CD8-positive, alpha-beta T cell (primary cell): ENCODE measurements at regions of chr6 and their contacts with region 1.

Region 1: GRCh38 chr6:30066577-30067459 is at the start of gene PPP1R11:
- DNase-seq: peak; percentile 96 to 100 (median 98)
- ATAC-seq: peak; percentile 96
- H3K4me3 ChIP-seq: peak within 1 kb of the TSS; percentile 95 to 98
- H3K4me3 Mint-ChIP-seq: peak within 1 kb of the TSS; percentile 100
- H3K27ac ChIP-seq: peak within 1 kb of the TSS; percentile 96 to 99
- H3K27ac Mint-ChIP-seq: peak within 1 kb of the TSS; percentile 100
- H3K4me1 ChIP-seq: peaks cover 44% of the 10 kb centered on the region
- H3K4me1 Mint-ChIP-seq: peaks cover 56% of the 10 kb centered on the region
- H3K27me3 ChIP-seq: peaks cover 0 to 1% of the 10 kb centered on the region in 2 experiments
- H3K27me3 Mint-ChIP-seq: peaks cover 12% of the 10 kb centered on the region
- CTCF ChIP-seq: no peak
- total RNA-seq, gene PPP1R11: 24.7 to 28.3 TPM

Region 2: GRCh38 chr6:29649701-29650673 is 416.8 kb before region 1 on chr6:
- CTCF ChIA-PET with region 1: interaction called, 3 read pairs
- POLR2A ChIA-PET with region 1: no interaction called
- intact Hi-C with region 1: loop called in 1 of 2 experiments (anchors 5 kb)
- DNase-seq: peak; percentile 93 to 99 (median 99)
- ATAC-seq: peak; percentile 94
- H3K4me3 ChIP-seq: peak overlapping the region; percentile 67 to 68
- H3K4me3 Mint-ChIP-seq: peak overlapping the region; percentile 97
- H3K27ac ChIP-seq: peak overlapping the region; percentile 93 to 95
- H3K27ac Mint-ChIP-seq: peak overlapping the region; percentile 100
- H3K4me1 ChIP-seq: peaks cover 12% of the 10 kb centered on the region
- H3K4me1 Mint-ChIP-seq: peaks cover 13% of the 10 kb centered on the region
- H3K27me3 ChIP-seq: no peaks in the 10 kb centered on the region
- H3K27me3 Mint-ChIP-seq: peaks cover under 1% of the 10 kb centered on the region
- CTCF ChIP-seq: peak; percentile 98

Region 3: DNA sequence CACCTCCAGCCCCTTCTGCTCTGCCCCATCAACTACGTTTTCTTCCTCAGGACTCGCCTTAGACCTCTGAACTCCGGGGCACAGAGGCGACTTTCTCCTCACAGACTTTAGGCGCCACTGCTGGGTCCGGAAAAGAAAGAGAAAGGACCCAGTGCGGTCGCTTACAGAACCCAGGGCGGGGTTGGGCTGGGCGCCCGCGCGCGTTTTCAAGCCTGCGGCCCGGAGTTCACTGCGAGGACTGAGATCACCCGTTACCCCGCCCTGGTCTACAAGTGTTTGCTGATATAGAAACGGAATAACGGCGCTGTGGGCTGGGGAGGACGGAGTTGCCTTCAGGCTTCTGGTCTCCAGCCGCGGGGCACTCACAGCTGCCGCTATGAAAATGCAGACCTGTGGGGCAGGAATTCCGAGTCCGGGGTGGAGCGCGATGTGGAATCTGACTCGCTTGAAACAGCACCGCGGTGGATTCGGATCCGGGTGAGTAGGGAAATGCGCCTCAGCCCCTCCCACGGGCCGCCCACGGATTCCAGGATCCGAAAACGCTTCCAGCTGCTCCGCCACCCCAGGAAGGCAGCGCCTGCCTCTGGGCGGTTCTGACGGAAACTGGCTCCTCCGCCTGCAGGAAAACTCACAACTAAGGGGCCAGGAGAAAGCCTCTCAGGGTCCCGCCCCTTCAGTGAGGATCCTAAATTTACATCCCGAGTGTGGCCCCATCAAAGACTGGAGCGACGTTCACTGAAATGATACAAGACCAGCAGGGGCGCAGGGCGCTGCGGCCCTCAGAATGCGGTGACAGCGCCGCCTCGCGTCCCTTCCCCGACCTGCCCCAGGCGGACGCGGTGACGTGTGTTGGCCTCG is 314.1 kb before region 1 on chr6:
- CTCF ChIA-PET with region 1: no interaction called
- POLR2A ChIA-PET with region 1: no interaction called
- intact Hi-C with region 1: loop called (anchors 2 kb)
- DNase-seq: peak; percentile 69 to 93 (median 85)
- ATAC-seq: peak; percentile 67
- H3K4me3 ChIP-seq: peak overlapping the region; percentile 74 to 96
- H3K4me3 Mint-ChIP-seq: peak overlapping the region; percentile 96
- H3K27ac ChIP-seq: peak overlapping the region; percentile 67 to 75
- H3K27ac Mint-ChIP-seq: peak overlapping the region; percentile 92
- H3K4me1 ChIP-seq: peaks cover 21% of the 10 kb centered on the region
- H3K4me1 Mint-ChIP-seq: peaks cover 40% of the 10 kb centered on the region
- H3K27me3 ChIP-seq: no peaks in the 10 kb centered on the region
- H3K27me3 Mint-ChIP-seq: no peaks in the 10 kb centered on the region
- CTCF ChIP-seq: peak; percentile 98

Region 4: DNA sequence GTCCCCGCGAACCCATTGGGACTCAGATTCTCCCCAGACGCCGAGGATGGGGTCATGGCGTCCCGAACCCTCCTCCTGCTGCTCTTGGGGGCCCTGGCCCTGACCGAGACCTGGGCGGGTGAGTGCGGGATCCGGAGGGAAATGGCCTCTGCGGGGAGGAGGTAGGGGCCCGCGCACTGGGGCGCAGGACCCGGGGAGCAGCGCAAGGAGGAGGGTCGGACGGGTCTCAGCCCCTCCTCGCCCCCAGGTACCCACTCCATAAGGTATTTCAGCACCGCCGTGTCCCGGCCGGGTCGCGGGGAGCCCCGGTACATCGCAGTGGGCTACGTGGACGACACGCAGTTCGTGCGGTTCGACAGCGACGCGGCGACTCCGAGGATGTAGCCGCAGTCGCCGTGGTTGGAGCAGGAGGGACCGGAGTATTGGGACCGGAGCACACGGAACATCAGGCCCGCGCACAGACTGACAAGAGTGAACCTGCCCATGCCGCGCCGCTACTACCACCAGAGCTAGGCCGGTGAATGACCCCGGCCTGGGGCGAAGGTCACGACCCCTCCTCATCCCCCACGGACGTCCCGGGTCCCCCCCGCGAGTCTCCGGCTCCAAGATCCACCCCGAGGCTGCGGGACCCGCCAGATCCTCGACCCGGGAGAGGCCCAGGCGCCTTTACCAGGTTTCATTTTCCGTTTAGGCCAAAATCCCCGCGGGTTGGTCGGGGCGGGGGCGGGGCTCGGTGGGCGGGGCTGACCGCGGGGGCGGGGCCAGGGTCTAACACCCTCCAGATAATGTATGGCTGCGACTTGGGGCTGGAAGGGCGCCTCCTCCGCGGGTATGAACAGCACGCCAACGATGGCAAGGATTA is 140.2 kb before region 1 on chr6:
- CTCF ChIA-PET with region 1: no interaction called
- POLR2A ChIA-PET with region 1: no interaction called
- intact Hi-C with region 1: loop called (anchors 2 to 5 kb)
- DNase-seq: peak; percentile 65 to 93 (median 83)
- ATAC-seq: peak; percentile 93
- H3K4me3 ChIP-seq: peak overlapping the region; percentile 88 to 93
- H3K4me3 Mint-ChIP-seq: peak overlapping the region; percentile 83
- H3K27ac ChIP-seq: peak overlapping the region; percentile 92 to 99
- H3K27ac Mint-ChIP-seq: peak overlapping the region; percentile 94
- H3K4me1 ChIP-seq: peaks cover 8% of the 10 kb centered on the region
- H3K4me1 Mint-ChIP-seq: peaks cover 32% of the 10 kb centered on the region
- H3K27me3 ChIP-seq: no peaks in the 10 kb centered on the region
- H3K27me3 Mint-ChIP-seq: no peaks in the 10 kb centered on the region
- CTCF ChIP-seq: no peak

Region 5: DNA sequence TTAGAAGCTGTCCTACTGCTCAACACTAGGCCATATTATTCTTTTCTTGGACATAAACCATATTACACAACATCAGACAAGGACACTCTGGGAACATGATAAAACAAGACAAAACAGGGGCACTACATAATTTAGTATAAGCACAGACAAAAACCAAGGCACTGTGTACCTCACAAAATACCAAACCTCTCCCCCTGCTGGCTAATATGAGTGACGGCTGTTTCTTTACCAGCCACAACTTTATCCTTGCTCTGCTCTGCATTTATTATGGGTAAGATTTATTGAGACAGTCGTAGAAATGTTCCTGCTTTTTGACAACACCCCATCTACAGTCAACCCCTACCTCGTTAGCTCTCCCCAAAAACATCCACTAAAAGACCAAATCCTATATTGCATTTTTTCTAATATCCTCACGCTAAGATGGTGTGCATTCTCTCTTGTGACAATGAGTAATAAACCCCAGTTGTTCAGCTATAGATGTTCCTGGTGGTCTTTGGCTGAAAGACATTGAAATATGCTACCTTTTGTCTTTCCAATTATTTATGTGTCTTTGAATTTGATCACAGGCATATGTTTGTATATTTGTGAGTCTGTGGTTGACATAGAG is 29.5 kb before region 1 on chr6:
- CTCF ChIA-PET with region 1: no interaction called
- POLR2A ChIA-PET with region 1: no interaction called
- intact Hi-C with region 1: no loop called
- DNase-seq: peak in 2 of 9 experiments; percentile 14 to 28
- ATAC-seq: no peak
- H3K4me3 ChIP-seq: no peak overlapping the region
- H3K4me3 Mint-ChIP-seq: no peak overlapping the region
- H3K27ac ChIP-seq: no peak overlapping the region
- H3K27ac Mint-ChIP-seq: no peak overlapping the region
- H3K4me1 ChIP-seq: no peaks in the 10 kb centered on the region
- H3K4me1 Mint-ChIP-seq: peaks cover 10% of the 10 kb centered on the region
- H3K27me3 ChIP-seq: no peaks in the 10 kb centered on the region
- H3K27me3 Mint-ChIP-seq: no peaks in the 10 kb centered on the region
- CTCF ChIP-seq: peak; percentile 23

Region 6: DNA sequence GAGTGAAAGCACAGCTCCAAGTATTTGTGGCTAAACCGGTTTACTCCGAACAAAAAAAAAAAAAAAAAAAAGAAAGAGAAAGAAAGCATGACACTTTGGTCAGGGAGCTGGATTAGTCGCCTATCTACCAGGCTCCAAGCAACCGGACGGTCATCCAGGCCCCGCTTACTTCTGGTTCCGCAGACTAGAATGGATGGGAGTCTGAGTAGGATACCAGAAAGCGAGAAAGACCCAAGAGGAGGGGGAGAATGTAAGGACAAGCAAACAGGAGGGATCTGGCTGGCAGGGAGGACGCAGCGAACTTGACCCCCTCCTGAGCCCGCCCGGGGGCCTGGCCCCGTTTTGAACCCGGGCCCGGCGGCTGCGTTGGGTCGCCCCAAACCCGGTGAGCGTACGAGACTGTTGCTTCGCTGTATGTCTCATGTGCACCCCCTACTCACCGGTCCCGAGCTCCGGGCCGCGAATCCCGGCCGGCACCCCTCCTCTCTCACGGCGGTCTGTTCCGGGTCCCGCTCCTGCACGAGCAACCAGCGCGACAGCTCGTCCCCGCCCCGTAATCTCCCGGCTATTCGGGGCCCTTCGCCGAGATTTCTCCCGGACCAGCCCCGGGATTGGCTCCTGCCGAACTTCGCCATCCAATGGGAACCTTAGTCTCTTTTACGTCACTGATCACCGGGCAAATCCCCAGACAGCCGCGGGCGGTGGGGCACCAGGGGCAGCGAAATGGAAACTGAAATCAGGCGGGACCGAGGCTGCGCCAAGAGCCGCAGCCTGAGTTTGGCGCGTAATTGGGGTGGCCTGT is 146.2 kb after region 1 on chr6 and contains the start of gene TRIM26:
- CTCF ChIA-PET with region 1: no interaction called
- POLR2A ChIA-PET with region 1: interaction called, 3 read pairs
- intact Hi-C with region 1: loop called in 1 of 2 experiments (anchors 2 kb)
- DNase-seq: peak; percentile 92 to 98 (median 96)
- ATAC-seq: peak; percentile 86
- H3K4me3 ChIP-seq: peak within 1 kb of the TSS; percentile 76 to 99
- H3K4me3 Mint-ChIP-seq: peak within 1 kb of the TSS; percentile 99
- H3K27ac ChIP-seq: peak within 1 kb of the TSS; percentile 96
- H3K27ac Mint-ChIP-seq: peak within 1 kb of the TSS; percentile 99
- H3K4me1 ChIP-seq: peaks cover 33% of the 10 kb centered on the region
- H3K4me1 Mint-ChIP-seq: peaks cover 63% of the 10 kb centered on the region
- H3K27me3 ChIP-seq: no peaks in the 10 kb centered on the region
- H3K27me3 Mint-ChIP-seq: no peaks in the 10 kb centered on the region
- CTCF ChIP-seq: no peak
- total RNA-seq, gene TRIM26: 54.8 to 56.8 TPM

Region 7: GRCh38 chr6:30571075-30571768 is 504.4 kb after region 1 on chr6 and contains the start of gene ABCF1:
- CTCF ChIA-PET with region 1: no interaction called
- POLR2A ChIA-PET with region 1: no interaction called
- intact Hi-C with region 1: loop called in 1 of 2 experiments (anchors 2 kb)
- DNase-seq: peak; percentile 99 to 100 (median 100)
- ATAC-seq: peak; percentile 96
- H3K4me3 ChIP-seq: peak within 1 kb of the TSS; percentile 64 to 86
- H3K4me3 Mint-ChIP-seq: peak within 1 kb of the TSS; percentile 98
- H3K27ac ChIP-seq: peak within 1 kb of the TSS; percentile 90 to 98
- H3K27ac Mint-ChIP-seq: peak within 1 kb of the TSS; percentile 99
- H3K4me1 ChIP-seq: peaks cover 54% of the 10 kb centered on the region
- H3K4me1 Mint-ChIP-seq: peaks cover 69% of the 10 kb centered on the region
- H3K27me3 ChIP-seq: no peaks in the 10 kb centered on the region
- H3K27me3 Mint-ChIP-seq: no peaks in the 10 kb centered on the region
- CTCF ChIP-seq: no peak
- total RNA-seq, gene ABCF1: 121 to 130 TPM

Region 8: DNA sequence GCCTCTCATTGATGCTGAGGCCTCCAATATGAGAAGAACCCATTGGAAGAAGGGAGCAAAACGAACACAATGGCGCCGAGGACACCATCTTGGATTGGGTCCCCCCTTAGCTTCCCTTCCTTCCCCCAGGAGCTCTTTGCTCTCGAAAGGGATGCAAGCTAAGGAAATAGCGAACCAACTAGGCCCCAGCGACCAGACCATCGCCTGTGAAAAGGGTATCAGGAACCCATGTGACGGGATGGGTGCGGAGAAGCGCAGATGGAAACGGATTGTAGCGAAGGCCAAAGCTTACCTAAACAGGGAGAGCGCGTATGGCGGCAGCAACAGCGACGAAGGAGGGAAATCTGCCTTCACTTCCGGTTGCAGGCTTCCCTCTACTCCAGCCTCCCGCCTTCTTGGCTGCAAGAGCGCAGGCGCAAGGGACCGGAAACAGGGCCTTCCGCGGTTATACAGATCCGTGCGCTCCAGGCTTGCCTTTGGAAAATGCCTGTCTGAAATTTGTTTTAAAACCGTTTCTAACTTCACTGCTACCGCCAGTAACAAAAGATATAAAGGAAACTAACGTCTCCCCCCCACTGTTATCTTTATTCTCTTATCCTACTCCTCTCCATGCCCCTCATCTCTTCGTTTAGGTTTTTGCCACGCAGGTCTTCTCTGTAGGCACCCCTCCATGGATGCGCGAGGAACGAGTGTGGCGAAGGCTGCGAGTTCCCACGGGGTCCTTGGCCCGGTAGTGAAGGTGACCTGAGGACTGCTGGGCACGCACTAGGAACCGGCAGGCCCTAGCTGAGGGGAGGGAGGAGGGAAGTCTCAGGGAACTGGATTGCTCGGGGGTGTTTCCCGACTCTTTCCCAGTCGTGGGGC is 1475.1 kb after region 1 on chr6 and contains the start of gene DDX39B:
- CTCF ChIA-PET with region 1: no interaction called
- POLR2A ChIA-PET with region 1: no interaction called
- intact Hi-C with region 1: loop called in 1 of 2 experiments (anchors 10 kb)
- DNase-seq: peak; percentile 85 to 98 (median 93)
- ATAC-seq: peak; percentile 67
- H3K4me3 ChIP-seq: peak within 1 kb of the TSS; percentile 76 to 86
- H3K4me3 Mint-ChIP-seq: peak within 1 kb of the TSS; percentile 98
- H3K27ac ChIP-seq: peak within 1 kb of the TSS; percentile 95 to 96
- H3K27ac Mint-ChIP-seq: peak within 1 kb of the TSS; percentile 100
- H3K4me1 ChIP-seq: peaks cover 37% of the 10 kb centered on the region
- H3K4me1 Mint-ChIP-seq: peaks cover 56% of the 10 kb centered on the region
- H3K27me3 ChIP-seq: no peaks in the 10 kb centered on the region
- H3K27me3 Mint-ChIP-seq: no peaks in the 10 kb centered on the region
- CTCF ChIP-seq: no peak
- total RNA-seq, gene DDX39B: 483 to 518 TPM